ENCODE measurements at regions of chr7 and their contacts with region 1.

Region 1: GRCh38 chr7:139777948-139778841 is at the start of gene HIPK2:
- DNase-seq: peak; percentile 77
- H3K4me3 ChIP-seq: peak within 1 kb of the TSS; percentile 88
- H3K27ac ChIP-seq: peak within 1 kb of the TSS; percentile 60
- H3K4me1 ChIP-seq: peaks cover 14% of the 10 kb centered on the region
- H3K27me3 ChIP-seq: no peaks in the 10 kb centered on the region
- CTCF ChIP-seq: no peak
- total RNA-seq, gene HIPK2: 25.3 to 28.4 TPM

Region 2: DNA sequence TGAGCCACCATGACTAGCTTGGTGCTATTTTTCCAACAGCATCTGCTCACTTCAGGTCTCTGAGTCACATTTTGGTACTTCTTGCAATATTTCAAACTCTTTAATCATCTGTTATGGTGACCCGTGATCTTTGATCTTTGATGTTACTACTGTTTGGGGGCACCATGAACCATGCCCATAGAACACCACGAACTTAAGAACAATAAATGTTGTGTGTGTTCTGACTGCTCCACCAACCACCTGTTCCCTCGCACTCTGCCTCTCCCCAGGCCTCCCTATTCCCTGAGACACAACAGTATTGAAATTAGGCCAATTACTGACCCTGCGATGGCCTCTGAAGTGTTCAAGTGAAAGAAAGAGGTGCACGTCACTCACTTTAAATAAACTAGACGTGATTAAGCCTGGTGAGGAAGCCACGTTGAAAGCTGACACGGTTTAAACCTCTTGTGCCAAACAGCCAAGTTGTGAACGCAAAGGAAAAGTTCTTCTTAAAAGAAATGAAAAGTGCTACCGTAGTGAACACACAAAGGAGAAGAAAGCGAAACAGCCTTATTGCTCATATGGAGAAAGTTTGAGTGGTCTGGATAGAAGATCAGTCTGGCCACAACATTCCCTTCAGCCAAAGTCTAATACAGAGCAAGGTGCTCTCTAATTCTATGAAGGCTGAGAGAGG is 953.0 kb before region 1 on chr7:
- intact Hi-C with region 1: no loop called
- DNase-seq: no peak
- H3K4me3 ChIP-seq: no peak overlapping the region
- H3K27ac ChIP-seq: no peak overlapping the region
- H3K4me1 ChIP-seq: no peaks in the 10 kb centered on the region
- H3K27me3 ChIP-seq: no peaks in the 10 kb centered on the region
- CTCF ChIP-seq: no peak

Region 3: DNA sequence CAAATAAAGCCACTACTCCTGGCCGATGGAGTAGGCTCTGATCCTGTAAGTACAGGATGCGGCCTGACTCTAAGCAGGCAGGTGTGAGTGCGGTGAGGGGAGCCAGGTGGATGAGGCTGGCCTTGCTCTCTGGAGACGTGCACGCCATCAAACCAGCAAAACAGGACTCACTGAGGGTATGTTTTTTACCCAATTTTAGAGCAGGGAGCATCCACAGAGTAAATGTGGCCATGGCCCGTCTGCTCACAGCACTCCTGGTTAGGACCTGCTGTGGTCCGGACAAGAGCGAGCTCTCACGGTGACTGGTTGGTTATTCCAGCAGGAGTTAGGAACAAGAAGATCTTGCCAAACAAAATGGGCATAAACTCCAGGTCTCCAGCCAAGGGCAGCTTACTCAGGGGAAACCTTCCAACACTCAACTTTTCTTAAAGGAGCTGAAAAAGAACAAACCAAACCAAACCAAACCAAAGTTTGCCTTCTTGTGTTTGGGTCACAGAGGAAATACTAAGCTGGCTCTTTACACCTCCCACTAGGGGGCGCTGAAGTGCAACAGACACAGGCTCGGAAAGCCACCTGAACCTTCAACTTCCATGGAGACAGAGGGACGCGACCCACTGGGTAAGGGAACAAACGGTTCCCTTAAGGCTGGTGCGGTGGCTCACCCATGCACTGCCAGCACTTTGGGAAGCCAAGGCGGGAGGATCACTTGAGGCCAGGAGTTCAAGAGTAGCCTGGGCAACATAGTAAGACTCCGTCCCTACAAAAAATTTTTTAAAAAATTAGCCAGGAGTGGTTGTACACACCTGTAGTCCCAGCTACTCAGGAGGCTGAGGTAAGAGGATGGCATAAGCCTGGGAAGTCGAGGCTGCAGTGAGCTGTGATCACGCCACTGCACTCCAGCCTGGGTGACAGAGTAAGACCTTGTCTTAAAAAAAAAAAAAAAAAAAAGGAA is 132.3 kb before region 1 on chr7:
- intact Hi-C with region 1: loop called (anchors 10 kb)
- DNase-seq: peak; percentile 89
- H3K4me3 ChIP-seq: no peak overlapping the region
- H3K27ac ChIP-seq: no peak overlapping the region
- H3K4me1 ChIP-seq: peaks cover 4% of the 10 kb centered on the region
- H3K27me3 ChIP-seq: no peaks in the 10 kb centered on the region
- CTCF ChIP-seq: peak; percentile 95

Measured in colonic mucosa (tissue), 4 donors.